Thyroid gland (tissue), 4 donors: ENCODE measurements at regions of chr4 and their contacts with region 1.

Region 1: GRCh38 chr4:170047771-170048354 is 21.7 kb upstream of the MFAP3L start:
- DNase-seq: peak; percentile 57 to 64
- H3K4me3 ChIP-seq: no peak overlapping the region
- H3K27ac ChIP-seq: no peak overlapping the region
- H3K4me1 ChIP-seq: no peaks in the 10 kb centered on the region
- H3K27me3 ChIP-seq: no peaks in the 10 kb centered on the region
- CTCF ChIP-seq: peak in 5 of 6 experiments; percentile 55 to 83 (median 76)
- POLR2A ChIP-seq: no peak

Region 2: DNA sequence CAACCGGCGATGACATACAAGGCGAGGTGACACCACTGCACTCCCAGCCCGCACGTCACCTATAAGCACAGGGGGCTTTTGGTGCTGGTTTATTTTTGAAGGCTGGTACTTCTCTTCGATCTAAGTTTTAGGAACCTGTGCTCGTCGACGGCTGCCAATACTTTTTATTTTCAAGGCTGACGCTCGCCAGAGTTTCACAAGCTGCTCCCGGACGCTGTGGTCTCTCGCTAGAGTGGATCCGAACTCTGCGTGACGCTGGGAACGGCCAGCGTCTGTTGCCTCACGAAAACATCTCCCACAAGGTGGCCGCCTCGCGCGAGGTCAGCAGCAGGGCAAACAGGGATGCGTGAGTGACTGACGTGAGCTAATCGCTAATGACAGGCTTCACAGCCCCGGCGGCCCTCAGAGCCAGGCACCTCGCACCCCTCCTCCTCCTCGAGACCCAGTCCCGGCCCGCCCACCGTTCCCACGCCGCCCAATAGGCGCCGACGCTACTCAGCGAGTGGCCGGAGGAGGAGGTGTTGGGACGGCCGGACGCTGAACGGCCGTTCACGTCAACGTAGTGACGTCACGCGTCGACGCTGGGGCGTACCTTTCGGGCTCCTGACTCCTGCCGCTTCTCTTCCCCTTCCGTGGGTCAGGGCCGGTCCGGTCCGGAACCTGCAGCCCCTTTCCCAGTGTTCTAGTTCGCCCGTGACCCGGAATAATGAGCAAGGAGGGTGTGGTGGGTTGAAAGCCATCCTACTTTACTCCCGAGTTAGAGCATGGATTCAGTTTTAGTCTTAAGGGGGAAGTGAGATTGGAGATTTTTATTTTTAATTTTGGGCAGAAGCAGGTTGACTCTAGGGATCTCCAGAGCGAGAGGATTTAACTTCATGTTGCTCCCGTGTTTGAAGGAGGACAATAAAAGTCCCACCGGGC is 427.6 kb before region 1 on chr4 and contains the start of gene CLCN3:
- intact Hi-C with region 1: loop called (anchors 10 kb)
- DNase-seq: peak; percentile 98 to 99
- H3K4me3 ChIP-seq: peak within 1 kb of the TSS; percentile 57 to 99 (median 59)
- H3K27ac ChIP-seq: peak within 1 kb of the TSS; percentile 91 to 97 (median 92)
- H3K4me1 ChIP-seq: peaks cover 9 to 18% of the 10 kb centered on the region in 2 donors
- H3K27me3 ChIP-seq: no peaks in the 10 kb centered on the region
- CTCF ChIP-seq: peak in 1 of 6 experiments; percentile 44
- POLR2A ChIP-seq: peak; percentile 71 to 98
- total RNA-seq, gene CLCN3: 43.3 to 72.4 (median 53.5) TPM

Region 3: DNA sequence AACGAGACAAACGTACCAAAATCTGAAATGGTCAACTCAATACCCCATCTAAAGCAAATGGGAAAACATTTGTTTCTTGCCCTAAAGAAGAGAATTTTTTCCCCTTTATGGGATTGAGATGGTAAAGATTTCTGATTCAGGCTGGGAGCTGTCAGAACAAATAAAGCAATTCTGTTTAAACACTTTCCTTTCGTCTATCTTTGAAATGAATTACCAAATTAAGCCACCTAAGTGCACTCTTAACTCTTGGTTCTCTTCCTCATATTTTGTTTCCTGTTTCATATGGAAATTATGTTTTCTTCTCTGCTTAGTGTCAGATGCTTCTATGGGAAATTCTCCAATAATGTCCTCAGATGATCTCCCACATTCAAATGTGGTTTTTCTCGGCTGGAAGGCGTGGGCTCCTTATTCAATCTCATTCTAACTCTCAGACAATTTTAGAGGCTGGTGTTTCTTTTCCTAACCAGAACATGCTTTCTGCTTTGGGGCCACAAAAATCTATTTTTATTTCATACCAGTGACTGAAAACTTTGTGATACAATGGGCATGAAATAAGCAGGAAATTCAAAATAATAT is 239.8 kb before region 1 on chr4:
- intact Hi-C with region 1: loop called (anchors 5 kb)
- DNase-seq: no peak
- H3K4me3 ChIP-seq: no peak overlapping the region
- H3K27ac ChIP-seq: no peak overlapping the region
- H3K4me1 ChIP-seq: no peaks in the 10 kb centered on the region
- H3K27me3 ChIP-seq: no peaks in the 10 kb centered on the region
- CTCF ChIP-seq: no peak
- POLR2A ChIP-seq: no peak

Region 4: GRCh38 chr4:170138580-170139194 is 90.8 kb after region 1 on chr4:
- intact Hi-C with region 1: no loop called
- DNase-seq: peak; percentile 69 to 76
- H3K4me3 ChIP-seq: no peak overlapping the region
- H3K27ac ChIP-seq: no peak overlapping the region
- H3K4me1 ChIP-seq: no peaks in the 10 kb centered on the region
- H3K27me3 ChIP-seq: no peaks in the 10 kb centered on the region
- CTCF ChIP-seq: peak in 5 of 6 experiments; percentile 42 to 77 (median 54)
- POLR2A ChIP-seq: no peak